ENCODE measurements at regions of chr22 and their contacts with region 1.

Region 1: DNA sequence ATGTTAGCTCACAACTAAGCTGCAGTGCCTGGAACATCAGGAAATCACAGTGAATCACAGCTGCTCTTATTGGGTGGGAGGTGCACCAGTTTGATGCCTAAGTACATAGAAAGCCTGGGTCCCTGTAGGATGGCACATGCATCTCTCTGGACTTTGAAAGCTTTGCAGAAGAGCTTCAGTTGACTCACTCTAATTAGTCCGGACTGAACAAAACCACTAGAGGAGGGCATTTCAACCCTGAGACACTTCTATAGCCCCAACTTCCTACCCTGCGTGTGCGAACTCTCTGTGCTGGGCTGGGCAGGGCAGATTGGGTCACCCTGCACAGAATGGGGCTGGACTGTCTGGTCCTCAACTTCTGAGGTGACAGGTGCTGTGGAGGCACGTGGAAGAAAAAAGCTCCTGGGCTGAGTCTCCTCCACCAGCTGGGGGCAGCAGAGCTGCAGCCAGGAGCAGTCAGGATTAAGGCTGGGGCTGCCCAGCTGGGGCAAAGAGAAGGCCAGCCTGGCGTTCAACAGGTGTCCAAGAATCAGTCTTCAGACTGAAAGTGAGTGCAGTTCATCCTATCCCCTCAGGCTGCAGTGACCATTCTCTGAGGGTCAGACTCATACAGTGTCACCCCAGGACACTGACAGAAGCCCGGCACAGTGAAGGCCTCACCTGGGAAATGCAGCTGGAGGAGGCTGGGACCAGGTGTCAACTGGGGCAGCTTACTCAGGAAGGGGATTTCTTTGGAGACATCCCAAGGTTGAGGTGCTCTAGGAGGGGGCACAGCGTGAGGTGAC is 22.1 kb downstream of the GGTLC2 start:
- DNase-seq: peak; percentile 22
- H3K4me3 Mint-ChIP-seq: no peak overlapping the region
- H3K27ac Mint-ChIP-seq: no peak overlapping the region
- H3K4me1 Mint-ChIP-seq: no peaks in the 10 kb centered on the region
- H3K27me3 Mint-ChIP-seq: peaks cover 13% of the 10 kb centered on the region

Region 2: GRCh38 chr22:22684580-22685561 is 18.4 kb after region 1 on chr22:
- CTCF ChIA-PET with region 1: interaction called, 10 read pairs
- POLR2A ChIA-PET with region 1: no interaction called
- DNase-seq: peak; percentile 21
- H3K4me3 Mint-ChIP-seq: no peak overlapping the region
- H3K27ac Mint-ChIP-seq: no peak overlapping the region
- H3K4me1 Mint-ChIP-seq: no peaks in the 10 kb centered on the region
- H3K27me3 Mint-ChIP-seq: no peaks in the 10 kb centered on the region

Region 3: GRCh38 chr22:22698263-22698750 is 31.8 kb after region 1 on chr22:
- CTCF ChIA-PET with region 1: no interaction called
- POLR2A ChIA-PET with region 1: no interaction called
- DNase-seq: no peak
- H3K4me3 Mint-ChIP-seq: no peak overlapping the region
- H3K27ac Mint-ChIP-seq: no peak overlapping the region
- H3K4me1 Mint-ChIP-seq: no peaks in the 10 kb centered on the region
- H3K27me3 Mint-ChIP-seq: no peaks in the 10 kb centered on the region

Measured in activated CD4-positive, alpha-beta T cell treated with anti-CD3 and anti-CD28 coated beads, Interleukin-2, amount 10 ng/mL, durations not matched to agents 7 days and 5 days (primary cell).